PC-9 (cell line): ENCODE measurements at regions of chr16 and their contacts with region 1.

Region 1: GRCh38 chr16:14529010-14529669 is 100.9 kb downstream of the PARN start:
- DNase-seq: peak; percentile 86
- H3K4me3 ChIP-seq: no peak overlapping the region
- H3K27ac ChIP-seq: peak overlapping the region; percentile 70
- H3K4me1 ChIP-seq: peaks cover 31% of the 10 kb centered on the region
- H3K27me3 ChIP-seq: no peaks in the 10 kb centered on the region
- CTCF ChIP-seq: peak; percentile 87

Region 2: DNA sequence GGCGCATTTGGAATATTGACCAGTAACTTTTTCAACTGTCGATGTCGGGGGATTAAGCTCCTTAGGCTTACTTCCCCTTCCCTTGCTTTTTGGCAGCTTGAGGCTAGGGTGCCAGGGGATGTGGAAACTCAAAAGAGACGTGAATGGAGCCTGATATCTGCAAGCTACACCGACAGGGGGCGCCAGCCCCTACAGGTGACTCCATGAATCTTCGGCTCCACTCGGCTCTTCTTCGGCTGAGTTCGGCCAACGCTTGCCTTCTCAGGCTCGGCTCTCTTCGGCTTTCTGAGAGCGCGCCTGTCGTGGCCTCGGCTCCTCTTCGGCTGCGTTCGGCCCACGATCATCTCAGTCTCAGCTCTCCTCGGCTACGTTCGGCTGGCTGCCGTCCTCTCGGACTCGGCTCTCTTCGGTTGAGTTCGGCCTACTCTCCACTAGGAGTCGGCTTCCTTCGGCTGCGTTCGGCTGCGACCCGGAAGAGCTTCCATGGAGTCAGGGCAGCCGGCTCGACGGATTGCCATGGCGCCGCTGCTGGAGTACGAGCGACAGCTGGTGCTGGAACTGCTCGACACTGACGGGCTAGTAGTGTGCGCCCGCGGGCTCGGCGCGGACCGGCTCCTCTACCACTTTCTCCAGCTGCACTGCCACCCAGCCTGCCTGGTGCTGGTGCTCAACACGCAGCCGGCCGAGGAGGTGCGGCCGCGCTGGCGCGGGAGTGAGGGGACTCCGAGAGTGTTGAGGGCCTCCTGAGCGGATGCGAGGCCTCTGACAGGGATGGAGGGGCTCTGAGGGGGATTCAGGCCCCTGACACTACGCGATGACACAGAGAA is 609.2 kb before region 1 on chr16 and contains the start of gene ERCC4:
- CTCF ChIA-PET with region 1: no interaction called
- POLR2A ChIA-PET with region 1: no interaction called
- intact Hi-C with region 1: loop called (anchors 2 kb)
- DNase-seq: peak; percentile 97 to 100
- H3K4me3 ChIP-seq: peak within 1 kb of the TSS; percentile 83
- H3K27ac ChIP-seq: peak within 1 kb of the TSS; percentile 49
- H3K4me1 ChIP-seq: peaks cover 9% of the 10 kb centered on the region
- H3K27me3 ChIP-seq: no peaks in the 10 kb centered on the region
- CTCF ChIP-seq: peak; percentile 95
- total RNA-seq, gene ERCC4: 13.5 and 17.4 TPM in 2 replicates

Region 3: DNA sequence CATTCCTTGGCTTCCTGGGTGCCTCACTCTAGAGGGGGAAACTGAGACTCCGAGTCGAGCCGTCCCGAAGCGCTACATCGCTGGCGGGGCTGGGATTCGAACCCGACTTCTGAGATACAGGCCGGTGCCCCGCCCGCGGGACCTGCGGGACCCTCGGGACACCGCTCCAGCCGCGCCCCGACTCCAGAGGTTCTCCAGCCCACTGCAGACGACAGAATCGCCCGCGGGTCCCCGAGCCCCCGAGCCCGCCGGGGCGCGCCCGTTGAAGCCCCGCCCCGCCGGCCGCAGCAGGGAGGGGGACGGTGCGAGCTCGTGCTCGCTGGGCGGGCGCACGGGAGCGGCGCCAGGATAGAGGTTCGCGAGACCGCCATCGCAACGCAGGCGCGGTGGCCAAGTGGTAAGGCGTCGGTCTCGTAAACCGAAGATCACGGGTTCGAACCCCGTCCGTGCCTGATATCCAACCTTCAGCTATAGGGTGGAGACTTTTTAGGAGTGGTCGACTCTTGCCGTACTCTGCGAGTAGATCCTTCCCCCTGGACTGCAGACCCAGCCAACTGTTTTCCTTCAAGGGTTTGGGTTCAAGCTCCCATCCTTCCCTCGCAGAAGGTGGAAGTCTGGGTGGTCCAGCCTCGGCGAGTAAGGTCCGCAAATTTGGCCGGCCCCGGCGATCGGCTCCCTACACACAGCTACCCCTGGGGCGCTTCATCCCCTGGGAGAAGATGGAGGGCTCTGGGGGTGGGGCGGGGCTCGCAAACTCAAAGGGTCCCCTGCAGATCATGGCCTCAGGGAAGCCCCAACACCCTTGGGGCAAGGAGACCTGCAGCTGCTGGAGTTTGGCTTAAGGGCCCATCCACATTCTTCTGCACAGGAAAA is 243.4 kb before region 1 on chr16:
- CTCF ChIA-PET with region 1: no interaction called
- POLR2A ChIA-PET with region 1: no interaction called
- intact Hi-C with region 1: loop called (anchors 1 kb)
- DNase-seq: peak; percentile 75 to 98
- H3K4me3 ChIP-seq: peak overlapping the region; percentile 75
- H3K27ac ChIP-seq: no peak overlapping the region
- H3K4me1 ChIP-seq: peaks cover 18% of the 10 kb centered on the region
- H3K27me3 ChIP-seq: no peaks in the 10 kb centered on the region
- CTCF ChIP-seq: no peak

Region 4: DNA sequence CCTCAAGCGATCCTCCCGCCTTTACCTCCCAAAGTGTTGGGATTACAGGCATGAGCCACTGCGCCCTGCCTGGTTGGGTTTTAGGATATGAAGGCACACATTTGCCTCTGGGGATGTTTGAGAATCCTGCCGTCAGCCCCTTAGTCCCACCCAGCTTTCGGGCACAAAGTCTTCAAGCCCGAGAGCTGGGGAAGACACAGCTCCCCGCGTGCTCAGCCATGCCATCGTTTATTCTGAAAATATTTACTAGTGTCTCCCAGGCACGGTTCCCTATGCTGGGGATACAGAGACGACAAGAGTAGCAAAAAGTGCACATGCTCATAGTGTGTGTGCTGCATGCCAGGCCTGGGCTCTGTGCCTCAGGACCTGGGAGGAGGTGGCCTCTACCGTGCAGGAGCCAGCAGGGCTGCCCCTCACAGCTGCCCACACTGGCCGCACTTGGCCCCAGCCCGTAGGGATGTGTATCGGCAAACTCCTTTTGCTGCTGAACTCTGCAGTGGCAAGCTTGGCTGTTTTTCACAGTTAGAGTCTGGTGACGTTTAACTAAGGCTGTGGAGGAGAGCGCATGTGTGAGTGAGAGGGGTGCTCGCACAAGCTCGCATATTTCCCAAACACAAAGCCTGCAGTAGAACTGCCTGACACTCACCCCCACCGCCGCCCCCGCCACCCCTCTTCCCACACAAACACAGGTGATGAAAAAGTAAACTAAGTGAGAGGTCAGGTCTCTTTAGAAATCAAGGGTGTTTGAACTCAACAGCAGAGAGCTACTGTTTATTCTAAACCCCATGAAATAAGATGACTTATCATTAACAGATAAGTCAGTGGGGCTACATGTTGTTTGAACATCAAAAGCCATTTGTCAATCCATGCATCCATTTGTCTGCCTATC is 191.6 kb before region 1 on chr16:
- CTCF ChIA-PET with region 1: no interaction called
- POLR2A ChIA-PET with region 1: no interaction called
- intact Hi-C with region 1: loop called (anchors 1 kb)
- DNase-seq: no peak
- H3K4me3 ChIP-seq: no peak overlapping the region
- H3K27ac ChIP-seq: no peak overlapping the region
- H3K4me1 ChIP-seq: no peaks in the 10 kb centered on the region
- H3K27me3 ChIP-seq: no peaks in the 10 kb centered on the region
- CTCF ChIP-seq: no peak

Region 5: DNA sequence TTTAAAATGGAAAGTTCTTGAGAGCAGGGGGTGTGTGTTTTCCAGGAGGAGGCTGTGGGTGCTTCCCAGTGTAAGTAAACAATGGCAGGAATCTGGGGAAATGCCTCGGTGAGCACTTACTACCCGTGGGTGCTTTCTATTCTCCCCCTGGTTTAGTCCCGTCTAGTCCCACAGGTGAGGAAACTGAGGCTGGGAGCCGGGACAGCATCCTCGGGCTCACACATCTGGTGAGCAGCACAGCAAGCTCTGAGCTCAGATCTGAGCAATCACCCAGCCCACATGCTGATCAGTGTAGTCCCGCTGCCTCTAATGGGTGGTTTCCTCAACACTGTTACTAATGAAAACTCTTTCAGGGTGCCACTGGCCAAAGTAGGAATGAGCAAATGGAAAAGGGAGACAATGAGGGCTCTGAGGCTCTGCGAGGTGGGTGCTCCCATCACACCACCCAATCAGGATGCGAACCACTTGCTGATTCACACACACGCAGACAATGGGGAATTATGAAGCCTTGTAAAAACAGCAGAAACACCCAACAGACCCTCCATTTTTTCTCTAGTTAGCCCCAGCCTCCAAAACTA is 101.7 kb before region 1 on chr16:
- CTCF ChIA-PET with region 1: no interaction called
- POLR2A ChIA-PET with region 1: no interaction called
- intact Hi-C with region 1: loop called (anchors 2 kb)
- DNase-seq: peak; percentile 67 to 86
- H3K4me3 ChIP-seq: peak overlapping the region; percentile 6; the same call in 1 of the 2 replicates
- H3K27ac ChIP-seq: peak overlapping the region; percentile 94
- H3K4me1 ChIP-seq: peaks cover 53% of the 10 kb centered on the region
- H3K27me3 ChIP-seq: no peaks in the 10 kb centered on the region
- CTCF ChIP-seq: no peak

Region 6: GRCh38 chr16:14486520-14487303 is 42.4 kb before region 1 on chr16:
- CTCF ChIA-PET with region 1: interaction called, 10 read pairs
- POLR2A ChIA-PET with region 1: interaction called, 11 read pairs
- intact Hi-C with region 1: loop called (anchors 2 kb)
- DNase-seq: peak; percentile 79 to 89
- H3K4me3 ChIP-seq: peak overlapping the region; percentile 47; the same call in 1 of the 2 replicates
- H3K27ac ChIP-seq: peak overlapping the region; percentile 81
- H3K4me1 ChIP-seq: peaks cover 40% of the 10 kb centered on the region
- H3K27me3 ChIP-seq: no peaks in the 10 kb centered on the region
- CTCF ChIP-seq: no peak